Mammary epithelial cell (primary cell): ENCODE measurements at regions of chr7 and their contacts with region 1.

Region 1: DNA sequence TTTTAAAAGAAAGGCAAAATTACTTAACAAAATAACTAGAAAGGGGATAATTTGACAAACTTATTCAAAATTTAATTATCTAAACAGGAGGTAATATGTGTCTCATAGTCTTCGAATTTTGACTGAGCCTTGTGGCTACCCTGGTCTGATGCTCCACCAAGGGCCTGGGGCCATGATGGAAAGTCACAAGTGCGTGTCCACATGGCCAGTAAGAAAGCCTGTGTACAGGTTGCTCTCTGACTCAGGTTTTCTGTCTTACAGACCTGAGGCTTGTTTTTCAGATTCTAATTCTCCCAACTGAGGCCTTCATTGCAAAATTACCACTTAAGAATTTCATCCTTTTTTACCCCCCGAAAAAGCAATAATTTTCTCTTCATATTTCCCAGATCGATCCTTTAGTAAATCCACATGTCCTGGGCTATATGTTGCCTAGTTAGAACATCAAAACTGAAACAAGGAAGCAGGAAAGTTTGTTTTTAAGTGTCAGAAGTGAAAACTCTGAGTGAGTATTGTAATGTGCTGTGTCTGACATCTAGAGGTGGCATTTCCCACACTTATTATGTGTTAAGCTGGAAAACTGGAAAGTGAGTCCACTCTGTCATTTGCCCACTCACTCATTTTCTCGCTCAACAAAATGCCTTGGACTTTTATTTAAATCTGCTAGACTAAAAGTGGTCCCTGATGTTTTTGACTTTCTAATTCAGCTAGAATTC is 10.0 kb downstream of the CYP3A43 start:
- DNase-seq: peak; percentile 16
- H3K4me3 ChIP-seq: no peak overlapping the region
- H3K27ac ChIP-seq: no peak overlapping the region
- H3K4me1 ChIP-seq: peaks cover 3% of the 10 kb centered on the region
- H3K27me3 ChIP-seq: no peaks in the 10 kb centered on the region
- CTCF ChIP-seq: peak; percentile 25 to 61

Region 2: DNA sequence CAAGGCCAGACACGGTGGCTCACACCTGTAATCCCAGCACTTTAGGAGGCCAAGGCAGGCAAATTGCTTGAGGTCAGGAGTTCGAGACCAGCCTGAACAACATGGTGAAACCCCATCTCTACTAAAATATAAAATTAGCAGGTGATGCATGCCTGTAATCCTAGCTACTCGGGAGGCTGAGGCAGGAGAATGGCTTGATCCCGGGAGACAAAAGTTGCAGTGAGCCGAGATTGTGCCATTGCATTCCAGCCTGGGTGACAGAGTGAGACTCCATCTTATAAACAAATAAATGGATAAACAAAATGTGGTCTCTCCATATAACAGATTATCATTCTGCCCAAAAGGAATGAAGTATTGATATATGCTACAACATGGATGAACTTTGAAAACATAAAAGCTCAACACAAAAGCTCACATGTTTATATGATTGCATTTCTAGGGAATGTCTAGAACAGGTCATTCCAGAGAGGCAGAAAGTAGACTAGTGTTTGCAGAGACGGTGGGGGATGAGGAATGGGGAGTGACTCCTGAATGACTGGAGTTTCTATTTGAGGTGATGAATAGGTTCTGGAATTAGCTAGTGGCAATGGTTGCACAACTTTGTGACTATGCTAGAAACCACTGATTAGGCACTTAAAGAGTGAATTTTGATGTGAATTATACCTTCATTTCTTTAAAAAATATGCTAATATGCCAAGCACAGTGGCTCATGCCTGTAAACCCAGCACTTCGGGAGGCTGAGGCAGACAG is 636.9 kb before region 1 on chr7:
- CTCF ChIA-PET with region 1: no interaction called
- dilution Hi-C with region 1: no loop called
- in situ Hi-C with region 1: no loop called
- intact Hi-C with region 1: no loop called
- DNase-seq: peak; percentile 99
- H3K4me3 ChIP-seq: no peak overlapping the region
- H3K27ac ChIP-seq: peak overlapping the region; percentile 93
- H3K4me1 ChIP-seq: peaks cover 20% of the 10 kb centered on the region
- H3K27me3 ChIP-seq: no peaks in the 10 kb centered on the region
- CTCF ChIP-seq: no peak

Region 3: GRCh38 chr7:99525713-99526440 is 311.9 kb before region 1 on chr7:
- CTCF ChIA-PET with region 1: interaction called, 13 read pairs
- dilution Hi-C with region 1: no loop called
- in situ Hi-C with region 1: no loop called
- intact Hi-C with region 1: loop called (anchors 5 kb)
- DNase-seq: no peak
- H3K4me3 ChIP-seq: no peak overlapping the region
- H3K27ac ChIP-seq: no peak overlapping the region
- H3K4me1 ChIP-seq: no peaks in the 10 kb centered on the region
- H3K27me3 ChIP-seq: no peaks in the 10 kb centered on the region
- CTCF ChIP-seq: peak; percentile 19 to 46

Region 4: DNA sequence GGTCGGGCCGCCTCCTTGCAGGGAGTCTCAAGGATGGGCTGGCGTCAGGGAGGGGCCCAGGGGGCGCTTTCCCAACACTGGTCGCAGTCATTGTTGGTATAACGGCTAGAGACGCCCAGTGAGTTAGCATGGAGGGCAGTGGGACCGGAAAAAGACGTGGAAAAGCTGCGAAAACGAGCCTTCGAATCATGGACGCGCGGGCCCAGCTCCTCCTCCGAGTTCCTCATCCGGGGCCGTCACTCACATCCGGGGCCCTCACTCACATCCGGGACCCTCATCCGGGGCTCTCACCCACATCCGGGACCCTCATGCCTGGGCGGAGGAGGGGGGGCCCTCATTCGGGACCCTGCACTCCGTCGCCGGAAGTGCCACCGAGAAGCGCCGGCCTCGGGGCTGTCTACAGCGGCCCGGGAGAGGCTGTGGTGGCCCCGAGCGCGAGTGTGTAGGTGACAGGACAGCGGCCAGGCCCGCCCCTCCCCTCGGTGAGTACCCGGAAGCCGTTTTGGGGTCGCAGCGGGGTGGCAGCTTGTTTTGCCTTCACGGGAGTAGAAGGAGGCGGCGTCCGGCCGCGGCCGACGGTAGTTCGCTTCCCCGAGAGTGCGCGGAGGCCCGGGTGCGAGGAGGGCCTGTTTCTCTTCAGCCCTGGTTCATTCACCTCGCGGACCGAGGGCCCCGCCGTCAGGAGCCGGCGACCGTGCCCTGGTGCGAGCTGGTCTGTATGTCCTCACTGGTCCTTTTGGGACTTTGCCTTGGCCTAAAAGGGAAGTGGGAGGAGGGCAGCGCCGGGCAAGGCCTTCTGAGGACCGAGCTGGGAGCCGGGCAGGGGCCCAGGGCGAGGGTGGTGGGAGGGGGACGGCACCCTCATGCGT is 279.3 kb before region 1 on chr7 and contains the start of gene ZNF655:
- CTCF ChIA-PET with region 1: interaction called, 20 read pairs
- dilution Hi-C with region 1: no loop called
- in situ Hi-C with region 1: no loop called
- intact Hi-C with region 1: no loop called
- DNase-seq: peak; percentile 73
- H3K4me3 ChIP-seq: peak within 1 kb of the TSS; percentile 78 to 81 (median 81)
- H3K27ac ChIP-seq: peak within 1 kb of the TSS; percentile 73
- H3K4me1 ChIP-seq: peaks cover 43% of the 10 kb centered on the region
- H3K27me3 ChIP-seq: no peaks in the 10 kb centered on the region
- CTCF ChIP-seq: no peak
- total RNA-seq, gene ZNF655: 64.5 to 66.0 TPM

Region 5: GRCh38 chr7:100088621-100089457 is 251.0 kb after region 1 on chr7 and contains the start of gene COPS6:
- CTCF ChIA-PET with region 1: no interaction called
- dilution Hi-C with region 1: no loop called
- in situ Hi-C with region 1: no loop called
- intact Hi-C with region 1: no loop called
- DNase-seq: peak; percentile 77
- H3K4me3 ChIP-seq: peak within 1 kb of the TSS; percentile 87 to 93 (median 92)
- H3K27ac ChIP-seq: peak within 1 kb of the TSS; percentile 69
- H3K4me1 ChIP-seq: peaks cover 31% of the 10 kb centered on the region
- H3K27me3 ChIP-seq: no peaks in the 10 kb centered on the region
- CTCF ChIP-seq: no peak
- total RNA-seq, gene COPS6: 32.7 to 106 TPM